ENCODE measurements at regions of chr17 and their contacts with region 1.

Region 1: GRCh38 chr17:48593840-48594537 is 410 bp upstream of the HOXB5 start:
- DNase-seq: peak; percentile 65
- H3K4me3 ChIP-seq: peak overlapping the region in 1 of 3 experiments; percentile 46
- H3K27ac ChIP-seq: no peak overlapping the region
- H3K4me1 ChIP-seq: peaks cover 32% of the 10 kb centered on the region
- H3K27me3 ChIP-seq: peaks cover 12% of the 10 kb centered on the region
- CTCF ChIP-seq: peak; percentile 80 to 91

Region 2: DNA sequence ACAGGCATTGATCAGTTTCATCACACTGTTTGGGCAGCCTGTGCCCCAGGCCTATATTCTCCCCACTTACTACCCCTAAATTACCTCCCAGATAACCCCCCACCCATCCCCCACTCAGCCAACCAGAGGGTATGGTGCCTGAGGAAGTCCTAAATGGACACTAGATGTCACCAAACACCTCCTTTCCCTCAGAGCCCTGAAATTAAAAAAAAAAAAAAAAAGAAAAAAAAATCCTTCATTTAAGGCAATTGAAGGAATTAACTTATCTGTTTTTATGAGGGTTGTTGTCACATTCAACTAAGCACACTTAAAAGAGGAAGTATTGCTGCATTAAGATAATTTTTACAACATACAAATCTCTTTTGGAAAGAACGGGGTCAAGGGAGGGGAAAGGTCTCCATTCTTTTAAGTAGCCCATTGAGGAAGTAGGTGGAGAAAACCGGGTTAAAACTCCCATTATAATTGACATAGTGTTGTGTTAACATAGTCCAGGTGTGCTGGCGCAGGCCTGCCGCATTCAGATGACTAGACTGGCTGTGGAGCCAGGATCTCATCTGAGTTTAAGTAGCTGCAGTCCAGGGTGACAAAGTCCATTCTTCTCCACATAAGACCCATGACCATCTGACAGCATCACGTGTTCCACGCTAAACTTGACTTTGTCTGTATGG is 440.2 kb before region 1 on chr17:
- CTCF ChIA-PET with region 1: no interaction called
- dilution Hi-C with region 1: no loop called
- in situ Hi-C with region 1: loop called in 1 of 2 experiments (anchors 10 kb)
- intact Hi-C with region 1: loop called (anchors 5 kb)
- DNase-seq: no peak
- H3K4me3 ChIP-seq: no peak overlapping the region
- H3K27ac ChIP-seq: no peak overlapping the region
- H3K4me1 ChIP-seq: no peaks in the 10 kb centered on the region
- H3K27me3 ChIP-seq: peaks cover 4% of the 10 kb centered on the region
- CTCF ChIP-seq: peak; percentile 32 to 53

Region 3: DNA sequence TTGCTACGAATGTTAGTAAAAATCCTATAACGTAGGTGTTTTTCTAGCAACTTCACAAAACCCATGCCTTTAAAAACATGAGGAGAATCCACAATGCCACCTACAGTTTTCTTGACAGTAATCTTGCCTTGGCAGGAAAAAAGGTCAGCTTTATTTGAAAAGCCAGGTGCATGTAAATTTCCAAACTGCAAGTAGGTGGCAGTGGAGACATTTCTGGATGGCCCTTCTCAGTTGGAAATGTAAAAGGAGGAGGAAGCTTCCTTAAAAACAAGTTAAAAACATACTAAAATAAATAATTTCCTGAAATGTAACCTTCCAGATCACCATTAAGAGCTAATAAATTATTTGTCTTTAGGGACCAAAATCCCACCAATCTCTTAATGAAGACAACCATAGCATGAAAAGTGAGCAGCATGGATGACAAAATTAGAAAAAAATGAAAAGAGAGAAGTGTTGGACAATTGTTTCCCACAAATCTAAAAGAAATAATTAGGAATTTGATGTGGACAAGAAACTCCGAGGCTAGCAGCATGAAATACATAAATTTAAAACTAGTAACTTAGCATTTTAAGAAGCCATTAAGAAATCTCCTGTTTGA is 334.2 kb before region 1 on chr17:
- CTCF ChIA-PET with region 1: interaction called, 4 read pairs
- dilution Hi-C with region 1: no loop called
- in situ Hi-C with region 1: no loop called
- intact Hi-C with region 1: loop called (anchors 2 kb)
- DNase-seq: peak; percentile 30
- H3K4me3 ChIP-seq: no peak overlapping the region
- H3K27ac ChIP-seq: no peak overlapping the region
- H3K4me1 ChIP-seq: no peaks in the 10 kb centered on the region
- H3K27me3 ChIP-seq: no peaks in the 10 kb centered on the region
- CTCF ChIP-seq: peak; percentile 65 to 77

Region 4: GRCh38 chr17:48335858-48336500 is 258.0 kb before region 1 on chr17:
- CTCF ChIA-PET with region 1: interaction called, 9 read pairs
- dilution Hi-C with region 1: no loop called
- in situ Hi-C with region 1: loop called in 1 of 2 experiments (anchors 5 kb)
- intact Hi-C with region 1: loop called (anchors 1 kb)
- DNase-seq: peak; percentile 53
- H3K4me3 ChIP-seq: no peak overlapping the region
- H3K27ac ChIP-seq: no peak overlapping the region
- H3K4me1 ChIP-seq: peaks cover 3% of the 10 kb centered on the region
- H3K27me3 ChIP-seq: peaks cover 13% of the 10 kb centered on the region
- CTCF ChIP-seq: peak; percentile 69 to 71

Region 5: GRCh38 chr17:48655913-48656312 is 61.9 kb after region 1 on chr17:
- CTCF ChIA-PET with region 1: no interaction called
- dilution Hi-C with region 1: no loop called
- in situ Hi-C with region 1: no loop called
- intact Hi-C with region 1: no loop called
- DNase-seq: no peak
- H3K4me3 ChIP-seq: no peak overlapping the region
- H3K27ac ChIP-seq: no peak overlapping the region
- H3K4me1 ChIP-seq: no peaks in the 10 kb centered on the region
- H3K27me3 ChIP-seq: peaks cover 2% of the 10 kb centered on the region
- CTCF ChIP-seq: no peak

Region 6: GRCh38 chr17:48738803-48739526 is 145.0 kb after region 1 on chr17:
- CTCF ChIA-PET with region 1: interaction called, 14 read pairs
- dilution Hi-C with region 1: no loop called
- in situ Hi-C with region 1: no loop called
- intact Hi-C with region 1: no loop called
- DNase-seq: no peak
- H3K4me3 ChIP-seq: no peak overlapping the region
- H3K27ac ChIP-seq: no peak overlapping the region
- H3K4me1 ChIP-seq: no peaks in the 10 kb centered on the region
- H3K27me3 ChIP-seq: peaks cover 51% of the 10 kb centered on the region
- CTCF ChIP-seq: no peak

Measured in mammary epithelial cell (primary cell).